Right ventricle myocardium superior (tissue), 1 donor: ENCODE measurements at regions of chr19 and their contacts with region 1.

Region 1: DNA sequence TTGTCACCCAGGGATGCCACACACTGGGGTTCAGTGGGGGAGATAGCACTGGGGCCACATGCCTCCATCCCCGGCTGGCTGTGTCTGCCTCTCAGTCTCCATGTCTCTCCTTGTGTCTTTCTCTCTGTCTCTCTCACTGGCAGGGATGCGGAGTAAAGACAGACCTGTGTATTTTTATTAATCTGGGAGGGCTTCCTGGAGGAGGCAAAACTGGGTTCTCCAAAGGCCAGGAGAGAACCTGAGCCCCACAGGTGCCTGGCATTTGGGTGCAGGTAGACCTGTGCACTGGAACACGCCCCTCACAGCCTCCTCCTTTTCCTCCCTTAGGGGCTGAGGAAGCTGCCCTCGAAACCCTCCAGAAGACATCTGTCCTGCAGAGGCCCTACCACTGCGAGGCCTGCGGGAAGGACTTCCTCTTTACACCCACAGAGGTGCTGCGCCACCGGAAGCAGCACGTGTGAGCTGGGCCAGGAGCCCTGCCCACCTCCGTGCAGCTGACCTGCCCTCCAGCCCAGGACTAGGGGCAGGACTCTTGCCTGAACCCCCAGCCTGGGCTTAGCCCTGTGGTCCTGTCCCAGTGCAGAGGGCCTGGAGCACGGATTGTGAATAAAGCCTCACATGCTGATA is 32.7 kb downstream of the DHX34 start:
- DNase-seq: peak; percentile 62
- ATAC-seq: no peak

Region 2: DNA sequence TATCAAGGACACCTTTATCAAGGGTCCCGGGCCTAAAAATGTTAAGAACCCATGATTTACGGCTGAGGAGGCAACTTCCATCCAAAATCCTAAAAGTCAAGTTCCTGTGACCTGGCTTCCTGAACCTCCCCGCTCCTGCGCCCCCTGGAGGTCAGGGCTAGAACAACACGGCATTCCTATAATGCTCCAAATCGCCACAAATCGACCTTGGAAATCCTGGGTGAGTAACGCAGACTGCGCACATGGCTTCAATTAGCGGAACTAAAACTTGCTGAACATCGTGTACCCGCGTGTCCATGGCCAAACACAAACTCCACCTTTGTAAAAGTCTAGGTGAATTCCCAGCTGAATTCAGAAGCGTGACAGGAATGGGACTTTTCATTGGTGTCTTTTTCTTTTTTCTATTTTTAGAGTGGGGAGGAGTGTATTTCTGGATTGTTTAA is 76.4 kb before region 1 on chr19:
- intact Hi-C with region 1: loop called (anchors 10 kb)
- DNase-seq: peak; percentile 73
- ATAC-seq: peak; percentile 64